ENCODE measurements at regions of chr10 and their contacts with region 1.

Region 1: GRCh38 chr10:75772153-75772887 is 340.9 kb downstream of the LRMDA start:
- DNase-seq: peak in 2 of 4 donors; percentile 36 to 53
- ATAC-seq: peak; percentile 36
- H3K4me3 ChIP-seq: peak overlapping the region; percentile 14 to 30
- H3K27ac ChIP-seq: peak overlapping the region; percentile 70 to 73
- H3K4me1 ChIP-seq: peaks cover 13 to 32% of the 10 kb centered on the region in 2 donors
- H3K27me3 ChIP-seq: no peaks in the 10 kb centered on the region
- CTCF ChIP-seq: no peak

Region 2: DNA sequence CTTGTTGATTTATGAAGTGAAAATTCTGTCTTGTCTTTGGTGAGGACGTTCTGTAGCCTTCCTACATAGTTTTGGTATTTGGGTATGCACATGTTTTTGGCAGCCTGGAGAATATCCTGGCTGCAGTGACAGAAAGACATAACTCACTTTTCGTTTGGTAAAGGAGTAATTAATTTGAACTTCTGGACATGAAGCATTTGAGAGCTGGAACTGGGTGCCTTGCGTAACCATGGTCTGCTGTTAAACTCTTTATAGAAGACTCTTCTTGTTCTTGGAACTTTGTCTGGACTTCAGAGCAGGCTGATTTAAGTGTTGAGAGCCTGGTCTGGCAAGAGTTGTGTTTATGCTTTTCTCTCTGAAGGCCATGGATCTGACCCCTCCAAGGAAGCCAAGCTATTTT is 109.6 kb before region 1 on chr10:
- intact Hi-C with region 1: loop called in 1 of 2 experiments (anchors 5 kb)
- DNase-seq: peak in 3 of 4 donors; percentile 54 to 90 (median 79)
- ATAC-seq: peak; percentile 68
- H3K4me3 ChIP-seq: no peak overlapping the region
- H3K27ac ChIP-seq: peak overlapping the region in 1 of 2 donors; percentile 57
- H3K4me1 ChIP-seq: peaks cover 0 to 32% of the 10 kb centered on the region in 2 donors
- H3K27me3 ChIP-seq: no peaks in the 10 kb centered on the region
- CTCF ChIP-seq: no peak

Region 3: DNA sequence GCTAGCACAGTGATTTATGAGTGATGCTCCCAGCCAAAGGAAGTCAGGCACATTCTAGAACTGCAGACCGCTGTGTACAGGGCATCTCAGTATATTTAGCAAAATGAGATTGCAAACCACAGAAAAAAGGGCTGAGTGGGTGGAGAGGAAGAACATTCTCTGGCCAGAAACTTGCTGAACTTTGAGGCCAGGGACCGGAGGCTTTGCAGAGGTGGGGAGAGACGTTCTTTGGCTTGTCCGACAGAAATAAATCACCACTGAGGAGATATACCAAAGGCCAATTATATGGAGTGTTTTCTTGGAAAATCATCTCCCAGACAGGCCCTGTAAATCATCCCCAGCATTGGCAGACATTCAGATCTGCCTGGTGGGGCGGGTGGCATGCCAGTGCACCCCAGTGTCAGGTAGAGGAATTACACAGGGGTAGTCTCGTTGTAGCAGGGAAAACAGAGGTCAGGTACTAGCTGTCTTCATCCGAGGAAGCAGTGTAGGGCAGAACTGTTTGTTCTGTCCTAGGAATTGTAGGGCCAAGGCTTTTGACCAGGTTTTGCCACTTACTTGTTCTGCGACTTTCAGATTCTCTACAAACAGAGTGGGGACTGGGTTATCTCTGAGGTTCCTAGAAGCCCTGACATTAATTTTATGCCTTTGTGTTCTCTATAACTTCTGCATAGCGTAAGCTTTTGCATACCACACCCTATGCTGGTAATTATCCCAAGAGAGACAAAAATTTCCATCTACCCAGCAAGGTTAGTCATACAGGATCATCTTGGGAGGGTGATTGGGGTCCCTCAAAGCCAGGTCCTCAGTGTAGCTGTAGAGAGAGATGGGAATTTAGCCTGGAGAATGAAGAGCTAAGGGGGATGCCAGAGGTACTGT is 314.7 kb after region 1 on chr10:
- intact Hi-C with region 1: no loop called
- DNase-seq: no peak
- ATAC-seq: peak; percentile 74
- H3K4me3 ChIP-seq: no peak overlapping the region
- H3K27ac ChIP-seq: no peak overlapping the region
- H3K4me1 ChIP-seq: no peaks in the 10 kb centered on the region
- H3K27me3 ChIP-seq: no peaks in the 10 kb centered on the region
- CTCF ChIP-seq: peak in 1 of 2 donors; percentile 43